PC-9 (cell line): ENCODE measurements at regions of chr5 and their contacts with region 1.

Region 1: DNA sequence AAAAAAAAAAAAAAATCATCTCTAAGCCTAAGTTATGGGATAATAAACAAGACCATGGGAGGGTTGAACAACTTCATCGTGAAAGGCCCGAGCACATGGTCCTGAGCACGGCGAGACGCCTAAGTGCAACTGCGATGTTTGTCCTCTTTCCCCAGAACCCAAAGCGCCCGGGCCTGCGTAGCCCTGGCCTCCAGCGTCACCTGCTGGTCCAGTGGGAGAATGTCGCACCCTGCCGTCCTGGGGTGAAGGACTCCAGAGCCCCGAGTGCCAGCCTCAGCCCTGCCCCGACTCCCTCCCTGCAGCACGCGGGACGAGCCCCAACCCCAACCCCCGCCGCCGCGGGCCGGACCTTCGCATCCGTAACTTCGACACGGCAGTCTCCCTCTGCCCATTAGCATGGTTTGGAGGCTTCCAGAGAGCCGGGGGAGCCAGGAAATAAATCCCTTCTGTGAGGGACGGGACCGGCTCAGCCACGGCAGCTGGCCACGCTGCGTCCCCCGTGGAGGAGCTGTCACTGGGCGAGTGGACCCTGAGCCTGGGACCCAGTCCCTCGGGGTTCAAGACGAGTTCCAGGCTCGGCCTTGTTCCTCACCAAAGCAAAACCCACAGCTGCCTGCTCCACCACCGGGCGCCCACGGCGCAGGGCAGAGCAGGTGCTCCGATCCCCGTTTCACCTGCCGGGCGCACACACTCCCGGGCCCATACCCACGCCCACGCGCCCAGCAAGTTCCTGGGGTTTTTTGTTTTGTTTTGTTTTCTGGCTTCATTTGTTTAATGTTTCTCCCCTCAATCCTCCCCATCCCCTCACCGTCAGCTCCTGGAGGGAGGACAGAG is 132.5 kb upstream of the HAND1 start:
- DNase-seq: peak; percentile 66 to 85
- H3K4me3 ChIP-seq: peak overlapping the region; percentile 45; the same call in 1 of the 2 replicates
- H3K27ac ChIP-seq: no peak overlapping the region
- H3K4me1 ChIP-seq: peaks cover 14% of the 10 kb centered on the region; the same call in 1 of the 2 replicates
- H3K27me3 ChIP-seq: no peaks in the 10 kb centered on the region
- CTCF ChIP-seq: peak; percentile 93

Region 2: GRCh38 chr5:154467655-154468354 is 142.7 kb before region 1 on chr5:
- CTCF ChIA-PET with region 1: interaction called, 5 read pairs
- POLR2A ChIA-PET with region 1: no interaction called
- intact Hi-C with region 1: loop called (anchors 1 kb)
- DNase-seq: peak; percentile 54 to 84
- H3K4me3 ChIP-seq: no peak overlapping the region
- H3K27ac ChIP-seq: no peak overlapping the region
- H3K4me1 ChIP-seq: peaks cover 23% of the 10 kb centered on the region
- H3K27me3 ChIP-seq: no peaks in the 10 kb centered on the region
- CTCF ChIP-seq: peak; percentile 92

Region 3: DNA sequence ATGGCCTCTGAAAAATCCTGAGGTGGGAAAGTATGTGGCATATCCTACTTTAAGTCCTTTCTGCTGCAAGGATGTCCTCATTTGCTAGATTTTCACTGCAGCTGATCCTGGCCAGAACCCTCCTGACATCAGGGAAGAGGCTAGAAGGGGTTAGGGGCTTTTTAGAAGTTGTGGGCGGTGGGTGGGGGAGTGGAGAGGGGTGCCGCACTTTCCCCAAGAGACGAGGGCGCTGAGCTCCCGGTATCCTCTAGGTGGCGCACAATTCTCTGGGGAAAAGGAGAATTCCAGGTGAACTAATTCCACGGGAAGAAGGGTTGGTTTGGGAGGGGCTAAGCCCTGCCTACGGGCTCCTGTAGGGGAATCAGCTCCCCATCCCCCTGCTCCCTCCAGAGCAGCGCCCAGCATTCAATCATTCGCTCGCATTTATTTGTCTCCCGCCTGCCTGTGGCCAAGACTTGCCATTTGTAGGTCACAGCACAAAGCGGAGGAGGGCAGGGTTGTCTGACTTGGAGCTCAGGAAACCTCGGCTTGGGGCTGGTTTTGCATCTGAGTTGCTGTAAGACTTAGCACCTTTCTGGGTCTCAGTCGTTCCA is 89.6 kb before region 1 on chr5:
- CTCF ChIA-PET with region 1: interaction called, 3 read pairs
- POLR2A ChIA-PET with region 1: no interaction called
- intact Hi-C with region 1: loop called (anchors 1 kb)
- DNase-seq: peak; percentile 44 to 65
- H3K4me3 ChIP-seq: no peak overlapping the region; the same call in 1 of the 2 replicates
- H3K27ac ChIP-seq: no peak overlapping the region
- H3K4me1 ChIP-seq: peaks cover 15% of the 10 kb centered on the region
- H3K27me3 ChIP-seq: no peaks in the 10 kb centered on the region
- CTCF ChIP-seq: peak; percentile 87

Region 4: DNA sequence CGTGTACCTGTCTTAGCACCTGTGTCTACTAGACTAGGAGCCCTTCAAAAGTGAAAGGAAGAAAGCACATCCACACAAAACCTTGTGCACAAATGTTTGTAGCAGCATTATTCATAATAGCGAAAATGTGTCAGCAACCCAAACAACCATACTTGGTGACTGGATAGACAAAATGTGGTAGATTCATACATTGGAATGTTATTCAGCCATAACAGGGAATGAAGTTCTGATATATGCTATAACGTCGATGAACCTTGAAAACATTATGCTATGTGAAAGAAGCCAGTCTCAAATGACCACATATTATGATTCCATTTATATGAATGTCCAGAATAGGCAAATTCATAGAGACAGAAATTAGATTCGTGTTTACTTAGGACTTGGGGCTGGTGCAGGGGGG is 86.8 kb after region 1 on chr5:
- CTCF ChIA-PET with region 1: no interaction called
- POLR2A ChIA-PET with region 1: no interaction called
- intact Hi-C with region 1: no loop called
- DNase-seq: no peak
- H3K4me3 ChIP-seq: no peak overlapping the region
- H3K27ac ChIP-seq: no peak overlapping the region
- H3K4me1 ChIP-seq: peaks cover 19% of the 10 kb centered on the region
- H3K27me3 ChIP-seq: no peaks in the 10 kb centered on the region
- CTCF ChIP-seq: no peak